ENCODE measurements at regions of chr20 and their contacts with region 1.

Region 1: DNA sequence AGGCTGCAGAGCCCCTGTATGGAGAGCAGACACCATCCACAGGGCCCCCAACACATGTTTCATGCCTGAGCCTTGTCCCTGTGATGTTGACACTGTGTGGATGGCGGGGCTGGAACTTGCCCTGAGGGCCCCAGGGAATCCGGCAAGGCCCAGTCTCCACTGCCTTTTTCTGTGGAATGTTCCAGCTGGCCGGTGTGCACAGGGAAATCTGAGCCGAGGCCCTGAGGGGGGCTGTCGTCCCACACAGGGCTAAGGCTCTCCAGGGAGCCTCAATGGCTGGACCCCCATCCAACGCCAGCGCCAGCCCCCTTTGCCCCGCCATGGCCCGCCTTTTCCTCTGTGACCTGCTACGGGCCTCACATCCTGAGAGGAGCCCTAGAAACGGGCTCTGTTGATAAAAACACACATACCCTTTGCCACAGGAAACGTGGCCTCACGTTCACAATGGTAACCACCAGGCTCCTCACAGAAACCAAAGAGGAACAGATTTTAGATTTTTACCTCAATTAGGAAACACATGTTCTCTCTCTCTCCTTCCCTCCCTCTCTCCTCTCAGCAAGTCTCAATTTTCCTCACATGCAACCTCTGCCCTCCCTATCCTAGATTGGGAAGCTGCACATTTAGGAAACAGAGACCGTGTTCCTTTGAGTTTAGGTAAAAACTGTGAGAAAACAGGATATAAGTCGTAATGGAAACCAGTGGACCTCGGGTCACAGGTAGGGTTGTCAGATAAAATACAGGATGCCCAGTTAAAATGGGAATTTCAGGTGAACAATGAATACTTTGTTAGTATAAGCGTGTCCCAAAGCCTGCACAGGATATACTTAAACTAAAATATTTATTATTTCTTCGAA is 13.7 kb upstream of the ZNF831 start:
- DNase-seq: peak; percentile 94
- H3K4me3 Mint-ChIP-seq: peak overlapping the region; percentile 64
- H3K27ac Mint-ChIP-seq: peak overlapping the region; percentile 89
- H3K4me1 Mint-ChIP-seq: peaks cover 72% of the 10 kb centered on the region
- H3K27me3 Mint-ChIP-seq: no peaks in the 10 kb centered on the region

Region 2: DNA sequence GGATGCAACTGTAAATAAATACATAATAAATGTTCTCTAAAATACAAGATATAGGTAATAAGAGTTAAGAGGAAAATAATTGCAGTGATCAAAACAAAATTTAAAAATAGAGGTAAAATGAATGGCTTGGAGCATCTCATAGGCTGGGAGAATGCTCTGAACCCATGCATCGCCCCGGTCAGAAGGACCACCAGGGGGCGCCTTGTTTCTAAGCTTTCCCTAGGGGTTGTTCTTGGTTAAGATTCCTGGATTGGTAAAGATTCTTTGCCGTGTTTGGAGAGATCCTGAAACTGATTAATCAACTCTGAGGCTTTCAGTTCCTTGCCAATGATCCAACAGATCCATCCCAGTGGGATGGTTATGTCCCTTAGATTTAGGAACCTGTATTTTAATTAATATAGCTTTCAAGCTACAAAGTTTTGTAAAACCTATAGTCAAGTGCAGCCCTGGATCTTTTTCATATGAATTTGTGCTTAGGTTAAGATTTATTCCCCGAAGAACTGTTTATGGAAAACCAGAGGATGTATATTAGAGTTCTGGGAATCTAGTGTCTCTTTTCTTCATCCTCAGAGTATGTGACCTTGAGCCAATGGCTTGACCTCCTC is 61.9 kb before region 1 on chr20:
- intact Hi-C with region 1: loop called (anchors 5 kb)
- DNase-seq: peak; percentile 94
- H3K4me3 Mint-ChIP-seq: no peak overlapping the region
- H3K27ac Mint-ChIP-seq: no peak overlapping the region
- H3K4me1 Mint-ChIP-seq: no peaks in the 10 kb centered on the region
- H3K27me3 Mint-ChIP-seq: peaks cover 39% of the 10 kb centered on the region

Region 3: DNA sequence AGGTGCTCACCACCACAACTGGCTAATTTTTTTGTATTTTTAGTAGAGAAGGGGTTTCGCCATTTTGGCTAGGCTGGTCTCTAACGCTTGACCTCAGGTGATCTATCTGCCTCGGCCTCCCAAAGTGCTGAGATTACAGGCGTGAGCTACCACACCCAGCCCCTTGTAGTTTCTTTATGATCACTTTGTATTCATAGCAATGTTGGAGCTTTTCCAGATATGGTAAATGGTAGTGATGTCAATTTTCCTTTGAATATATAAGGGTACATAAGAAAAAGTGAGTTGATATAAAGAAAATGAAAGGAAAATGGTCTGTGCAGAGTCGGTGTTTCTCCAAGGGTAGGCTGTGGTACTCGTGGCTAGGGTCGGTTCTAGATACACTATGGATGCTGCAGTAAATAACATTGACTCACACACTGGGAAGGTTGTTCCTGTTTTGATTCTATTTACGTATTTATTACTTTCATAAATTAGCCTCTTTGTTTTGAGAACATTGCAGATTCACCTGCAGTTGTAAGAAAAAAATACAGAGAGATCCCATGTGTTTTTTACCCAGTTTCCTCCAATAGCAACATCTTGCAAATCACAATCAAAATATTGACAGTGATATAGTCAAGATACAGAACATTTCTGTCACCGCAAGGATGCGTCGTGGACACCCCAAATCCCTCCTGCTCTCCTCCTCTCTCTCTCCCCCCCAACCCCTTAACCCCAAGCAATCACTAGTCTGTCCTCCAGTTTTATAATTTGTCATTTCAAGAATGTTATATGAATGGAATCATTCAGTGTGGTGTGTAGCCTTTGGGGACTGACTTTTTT is 16.2 kb after region 1 on chr20:
- intact Hi-C with region 1: loop called (anchors 1 kb)
- DNase-seq: peak; percentile 75
- H3K4me3 Mint-ChIP-seq: peak overlapping the region; percentile 87
- H3K27ac Mint-ChIP-seq: peak overlapping the region; percentile 88
- H3K4me1 Mint-ChIP-seq: peaks cover 73% of the 10 kb centered on the region
- H3K27me3 Mint-ChIP-seq: no peaks in the 10 kb centered on the region

Region 4: GRCh38 chr20:59177261-59178250 is 27.7 kb after region 1 on chr20:
- intact Hi-C with region 1: loop called (anchors 1 kb)
- DNase-seq: peak; percentile 83
- H3K4me3 Mint-ChIP-seq: peak overlapping the region; percentile 63
- H3K27ac Mint-ChIP-seq: peak overlapping the region; percentile 95
- H3K4me1 Mint-ChIP-seq: peaks cover 60% of the 10 kb centered on the region
- H3K27me3 Mint-ChIP-seq: peaks cover 1% of the 10 kb centered on the region

Measured in activated CD4-positive, alpha-beta T cell treated with anti-CD3 and anti-CD28 coated beads, Interleukin-2, amount 10 ng/mL, durations not matched to agents 24 days and 14 days (primary cell).